Heart left ventricle (tissue), 16 donors: ENCODE measurements at regions of chr20 and their contacts with region 1.

Region 1: DNA sequence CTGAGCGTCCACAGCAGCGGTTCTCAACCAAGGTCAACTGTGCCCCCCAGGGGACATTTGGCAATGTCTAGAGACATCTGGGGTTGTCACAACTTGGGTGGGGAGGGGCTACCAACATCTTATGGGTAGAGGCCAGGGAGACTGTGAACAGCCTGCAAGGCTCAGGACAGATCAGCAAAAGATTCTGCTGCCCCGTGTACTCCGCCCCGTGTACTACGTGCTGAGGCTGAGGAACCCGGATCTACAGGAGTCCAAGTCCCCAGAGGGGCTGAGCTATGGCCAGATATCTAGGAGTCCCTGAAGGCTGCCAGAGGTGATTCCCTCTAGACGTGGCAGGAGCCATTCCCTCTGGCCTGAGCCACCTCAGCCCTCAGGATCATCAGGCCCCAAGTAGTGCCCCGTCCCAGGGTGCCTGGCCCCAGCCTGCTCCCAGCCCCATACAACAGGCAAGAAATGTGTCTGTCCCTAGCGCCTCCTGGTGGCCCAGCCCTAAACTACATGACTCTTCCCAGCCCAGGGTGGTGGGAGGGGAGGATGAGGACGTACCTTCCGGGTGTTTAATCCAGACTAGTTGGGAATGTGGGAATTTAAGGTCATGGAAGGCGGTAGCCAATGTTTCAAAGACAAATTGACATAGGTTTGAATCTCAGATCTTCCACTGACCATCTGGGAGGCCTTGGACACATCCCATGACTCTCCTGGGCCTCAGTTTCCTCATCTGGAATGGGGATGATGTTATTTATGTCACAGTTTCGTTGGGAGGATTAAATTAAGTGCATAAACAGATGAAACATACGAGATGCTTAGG is 49.5 kb upstream of the PTPN1 start:
- DNase-seq: peak; percentile 84 to 93 (median 89)
- ATAC-seq: peak; percentile 85 to 91 (median 89)
- H3K4me3 ChIP-seq: no peak overlapping the region
- H3K27ac ChIP-seq: peak overlapping the region in 8 of 12 donors; percentile 0 to 79 (median 54)
- H3K4me1 ChIP-seq: peaks cover 0 to 41% (median 18%) of the 10 kb centered on the region in 12 donors
- H3K27me3 ChIP-seq: no peaks in the 10 kb centered on the region
- CTCF ChIP-seq: peak; percentile 86 to 96 (median 92)
- POLR2A ChIP-seq: peak in 1 of 2 donors; percentile 36

Region 2: DNA sequence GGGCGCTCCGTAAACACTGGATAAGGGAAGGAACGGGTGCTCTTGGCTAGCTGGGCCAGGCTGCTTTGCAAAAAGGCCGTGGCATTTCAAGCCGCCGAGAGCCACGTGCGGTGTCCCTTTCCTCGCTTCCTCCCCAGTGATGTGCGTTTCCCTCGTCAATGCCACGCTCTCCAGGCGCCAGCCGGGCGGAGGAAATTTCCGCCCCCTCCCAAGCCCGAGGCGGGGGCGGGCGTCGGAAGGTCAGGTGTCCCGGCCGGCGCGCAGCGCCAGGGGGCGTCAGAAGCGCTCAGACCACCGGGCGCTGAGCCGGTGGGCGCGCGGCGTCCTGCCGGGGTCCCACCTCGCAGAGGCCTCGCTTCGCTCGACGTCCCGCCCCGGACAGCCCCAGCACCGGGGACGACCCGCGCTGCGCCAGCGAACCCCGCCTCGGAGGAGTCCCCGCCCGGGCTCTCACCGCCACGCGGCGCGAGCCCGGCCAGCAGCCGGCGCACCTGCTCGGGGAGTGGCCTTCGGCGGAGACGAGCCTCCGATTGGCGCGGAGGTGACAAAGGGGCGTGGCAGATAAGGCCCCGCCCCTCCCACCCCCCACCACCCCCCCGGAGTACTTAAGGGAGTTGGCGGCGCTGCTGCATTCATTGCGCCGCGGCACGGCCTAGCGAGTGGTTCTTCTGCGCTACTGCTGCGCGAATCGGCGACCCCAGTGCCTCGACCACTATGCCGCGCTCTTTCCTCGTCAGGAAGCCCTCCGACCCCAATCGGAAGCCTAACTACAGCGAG is 478.1 kb before region 1 on chr20 and contains the start of gene SNAI1:
- intact Hi-C with region 1: loop called in 1 of 10 experiments (anchors 10 kb)
- DNase-seq: peak; percentile 84 to 90 (median 87)
- ATAC-seq: peak; percentile 67 to 91 (median 85)
- H3K4me3 ChIP-seq: peak within 1 kb of the TSS; percentile 23 to 78 (median 60)
- H3K27ac ChIP-seq: peak within 1 kb of the TSS; percentile 3 to 86 (median 78)
- H3K4me1 ChIP-seq: peaks cover 0 to 60% (median 37%) of the 10 kb centered on the region in 12 donors
- H3K27me3 ChIP-seq: no peaks in the 10 kb centered on the region
- CTCF ChIP-seq: peak; percentile 23 to 85 (median 62)
- POLR2A ChIP-seq: peak in 1 of 2 donors; percentile 86
- total RNA-seq, gene SNAI1: 0.37 to 6.7 (median 1.6) TPM

Region 3: DNA sequence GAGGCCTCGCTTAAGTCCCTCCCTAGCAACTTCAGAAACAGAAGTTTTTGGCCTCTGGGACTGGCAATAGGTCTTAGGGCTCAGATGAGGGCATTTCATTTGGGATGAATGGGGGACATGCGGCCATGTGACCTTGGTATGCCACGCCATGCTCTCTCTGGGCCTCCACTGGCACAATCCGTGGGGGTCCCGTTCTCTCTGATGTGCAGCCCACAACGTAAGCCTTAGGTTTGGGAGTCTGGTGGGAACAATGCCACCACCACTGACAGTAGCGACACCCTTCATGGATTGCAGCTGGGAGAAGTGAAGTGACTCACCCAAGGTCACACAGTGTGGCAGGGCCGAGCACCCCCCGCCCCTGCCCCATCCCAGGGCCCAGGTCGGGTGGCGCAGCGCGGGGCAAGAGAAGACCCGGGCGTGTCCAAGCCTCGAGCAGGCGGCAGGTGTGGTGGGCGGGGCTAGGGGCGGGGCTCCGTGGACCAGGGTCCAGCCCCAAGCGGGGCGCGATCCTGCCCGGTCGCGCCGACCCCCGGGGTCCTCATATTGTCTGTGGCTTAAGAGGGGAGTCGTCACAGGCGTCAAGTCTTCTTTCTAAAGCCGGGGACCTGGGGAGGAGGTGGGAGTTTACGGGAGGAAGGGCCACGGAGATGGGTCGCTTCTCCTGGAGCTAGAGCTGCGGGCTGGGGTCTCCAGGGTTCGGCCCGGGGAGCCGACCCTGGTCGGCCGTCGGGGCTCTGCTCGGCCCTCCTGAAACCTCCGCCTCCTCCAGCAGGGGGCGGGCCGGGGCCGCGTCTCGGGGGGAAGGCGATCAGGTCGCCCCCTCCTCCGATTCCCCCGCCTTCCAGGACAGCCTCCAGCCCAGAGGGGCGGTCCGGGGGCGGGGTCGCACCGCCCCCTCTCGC is 270.7 kb before region 1 on chr20:
- intact Hi-C with region 1: loop called (anchors 1 to 2 kb)
- DNase-seq: peak; percentile 90 to 96 (median 92)
- ATAC-seq: peak; percentile 58 to 81 (median 76)
- H3K4me3 ChIP-seq: peak overlapping the region; percentile 76 to 96 (median 88)
- H3K27ac ChIP-seq: peak overlapping the region; percentile 97 to 100 (median 98)
- H3K4me1 ChIP-seq: peaks cover 0 to 51% (median 20%) of the 10 kb centered on the region in 12 donors
- H3K27me3 ChIP-seq: no peaks in the 10 kb centered on the region
- CTCF ChIP-seq: peak; percentile 73 to 84 (median 80)
- POLR2A ChIP-seq: no peak

Region 4: DNA sequence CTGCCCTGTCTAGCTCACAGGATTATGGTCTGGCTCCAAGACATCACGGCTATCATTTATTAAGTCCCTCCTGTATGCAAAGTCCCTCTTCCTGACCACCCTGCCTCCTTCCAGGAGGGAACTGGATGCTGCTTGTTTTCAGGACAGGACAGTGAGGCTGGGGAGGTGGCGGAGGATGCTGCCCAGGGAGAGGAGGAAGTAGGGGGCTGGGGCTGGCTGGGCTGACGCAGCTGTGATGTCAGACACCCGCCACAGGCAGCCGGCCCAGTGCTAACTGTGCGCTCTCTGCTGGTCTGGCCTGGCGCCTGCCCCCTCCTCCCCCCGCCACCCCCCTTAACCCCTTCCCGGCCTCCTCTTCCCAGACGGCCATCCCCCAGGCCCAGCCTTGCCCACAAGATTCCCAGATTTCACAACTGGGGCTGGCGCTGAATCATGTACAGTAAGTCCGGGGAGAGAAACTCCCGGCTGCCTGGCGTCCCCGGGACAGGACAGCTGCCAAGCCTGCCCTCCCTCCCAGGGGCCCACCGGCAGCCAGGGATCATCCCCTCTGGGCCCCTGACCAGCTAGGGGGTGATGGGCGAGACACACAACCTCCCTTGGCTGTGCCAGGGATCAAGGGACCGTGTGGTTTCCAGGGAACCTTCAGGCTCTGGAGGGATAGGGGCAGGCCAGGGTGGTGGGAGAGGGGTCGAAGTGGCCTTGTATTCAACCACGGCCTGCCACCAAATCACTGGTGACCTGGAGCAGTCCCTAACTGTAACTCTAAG is 152.0 kb before region 1 on chr20:
- intact Hi-C with region 1: loop called in 4 of 10 experiments (anchors 5 to 10 kb)
- DNase-seq: peak; percentile 91 to 97 (median 93)
- ATAC-seq: peak; percentile 61 to 92 (median 82)
- H3K4me3 ChIP-seq: peak overlapping the region in 9 of 12 donors; percentile 16 to 50 (median 35)
- H3K27ac ChIP-seq: peak overlapping the region; percentile 62 to 96 (median 91)
- H3K4me1 ChIP-seq: peaks cover 4 to 79% (median 50%) of the 10 kb centered on the region in 12 donors
- H3K27me3 ChIP-seq: no peaks in the 10 kb centered on the region
- CTCF ChIP-seq: peak in 7 of 12 donors; percentile 13 to 45 (median 32)
- POLR2A ChIP-seq: peak in 1 of 2 donors; percentile 40

Region 5: GRCh38 chr20:50395258-50395729 is 65.4 kb before region 1 on chr20:
- intact Hi-C with region 1: loop called in 7 of 10 experiments (anchors 5 to 10 kb)
- DNase-seq: peak; percentile 60 to 96 (median 86)
- ATAC-seq: peak; percentile 70 to 87 (median 85)
- H3K4me3 ChIP-seq: no peak overlapping the region
- H3K27ac ChIP-seq: peak overlapping the region; percentile 62 to 95 (median 81)
- H3K4me1 ChIP-seq: peaks cover 0 to 61% (median 32%) of the 10 kb centered on the region in 12 donors
- H3K27me3 ChIP-seq: no peaks in the 10 kb centered on the region
- CTCF ChIP-seq: no peak
- POLR2A ChIP-seq: no peak

Region 6: GRCh38 chr20:50409495-50409894 is 51.2 kb before region 1 on chr20:
- intact Hi-C with region 1: loop called in 7 of 10 experiments (anchors 5 to 10 kb)
- DNase-seq: no peak
- ATAC-seq: peak; percentile 26 to 69 (median 60)
- H3K4me3 ChIP-seq: no peak overlapping the region
- H3K27ac ChIP-seq: peak overlapping the region in 11 of 12 donors; percentile 40 to 80 (median 49)
- H3K4me1 ChIP-seq: peaks cover 0 to 36% (median 17%) of the 10 kb centered on the region in 12 donors
- H3K27me3 ChIP-seq: no peaks in the 10 kb centered on the region
- CTCF ChIP-seq: no peak
- POLR2A ChIP-seq: no peak

Region 7: GRCh38 chr20:50516180-50516934 is 55.7 kb after region 1 on chr20:
- intact Hi-C with region 1: no loop called
- DNase-seq: no peak
- ATAC-seq: no peak
- H3K4me3 ChIP-seq: no peak overlapping the region
- H3K27ac ChIP-seq: peak overlapping the region in 4 of 12 donors; percentile 25 to 91 (median 56)
- H3K4me1 ChIP-seq: peaks cover 5 to 100% (median 85%) of the 10 kb centered on the region in 12 donors
- H3K27me3 ChIP-seq: no peaks in the 10 kb centered on the region
- CTCF ChIP-seq: no peak
- POLR2A ChIP-seq: no peak

Region 8: GRCh38 chr20:50575847-50576720 is 115.4 kb after region 1 on chr20:
- intact Hi-C with region 1: loop called in 3 of 10 experiments (anchors 2 to 5 kb)
- DNase-seq: peak; percentile 62 to 83 (median 72)
- ATAC-seq: peak; percentile 64 to 72 (median 66)
- H3K4me3 ChIP-seq: no peak overlapping the region
- H3K27ac ChIP-seq: peak overlapping the region in 9 of 12 donors; percentile 13 to 84 (median 56)
- H3K4me1 ChIP-seq: peaks cover 0 to 71% (median 36%) of the 10 kb centered on the region in 12 donors
- H3K27me3 ChIP-seq: no peaks in the 10 kb centered on the region
- CTCF ChIP-seq: peak; percentile 53 to 79 (median 70)
- POLR2A ChIP-seq: no peak